Mammary epithelial cell (primary cell): ENCODE measurements at regions of chr2 and their contacts with region 1.

Region 1: DNA sequence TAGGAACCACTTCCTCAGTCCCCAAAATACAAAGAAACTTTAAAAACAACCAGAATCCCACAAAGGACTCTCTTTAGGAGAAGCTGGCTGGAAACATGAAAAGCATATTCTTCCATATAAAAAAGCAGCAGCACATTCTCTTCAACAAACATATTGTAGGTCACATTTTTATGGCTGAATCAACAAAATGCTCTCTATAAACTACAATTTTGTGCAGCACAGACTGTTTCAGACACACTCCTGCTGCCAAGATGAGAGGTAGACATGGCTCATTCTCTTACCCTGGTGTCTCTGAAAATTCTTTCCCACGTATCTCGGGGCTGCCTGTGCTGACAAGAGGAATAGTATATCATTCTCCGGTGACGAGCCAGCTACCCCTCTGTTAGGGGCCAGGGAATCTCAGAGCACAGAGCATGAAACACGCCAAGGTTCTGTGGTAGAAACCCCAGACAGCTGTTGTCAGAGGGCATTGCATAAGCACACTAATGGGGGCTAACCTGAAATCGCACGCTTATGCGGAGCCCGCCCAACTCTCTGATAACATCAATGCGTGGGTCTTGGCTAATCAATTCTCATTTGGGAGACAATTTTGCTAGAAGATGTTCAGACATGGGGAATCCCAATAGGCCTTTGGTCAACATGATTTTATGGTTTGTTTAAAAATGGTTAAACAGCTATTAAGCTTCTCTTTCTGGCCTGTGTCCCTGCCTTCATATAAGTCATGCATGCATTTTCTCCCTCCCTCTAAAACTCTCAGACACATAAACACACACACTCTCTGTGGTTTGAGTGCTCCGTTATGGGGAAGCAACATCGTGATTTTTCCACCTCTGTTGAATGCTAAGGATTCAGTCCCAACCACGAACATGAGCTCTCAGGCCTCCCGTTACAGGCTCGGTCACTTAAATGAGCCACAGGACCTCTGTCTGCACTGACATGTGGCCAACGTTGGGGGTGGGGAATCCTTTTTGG is 177.5 kb downstream of the INO80D start:
- DNase-seq: no peak
- H3K4me3 ChIP-seq: no peak overlapping the region
- H3K27ac ChIP-seq: no peak overlapping the region
- H3K4me1 ChIP-seq: no peaks in the 10 kb centered on the region
- H3K27me3 ChIP-seq: peaks cover 2% of the 10 kb centered on the region
- CTCF ChIP-seq: no peak

Region 2: DNA sequence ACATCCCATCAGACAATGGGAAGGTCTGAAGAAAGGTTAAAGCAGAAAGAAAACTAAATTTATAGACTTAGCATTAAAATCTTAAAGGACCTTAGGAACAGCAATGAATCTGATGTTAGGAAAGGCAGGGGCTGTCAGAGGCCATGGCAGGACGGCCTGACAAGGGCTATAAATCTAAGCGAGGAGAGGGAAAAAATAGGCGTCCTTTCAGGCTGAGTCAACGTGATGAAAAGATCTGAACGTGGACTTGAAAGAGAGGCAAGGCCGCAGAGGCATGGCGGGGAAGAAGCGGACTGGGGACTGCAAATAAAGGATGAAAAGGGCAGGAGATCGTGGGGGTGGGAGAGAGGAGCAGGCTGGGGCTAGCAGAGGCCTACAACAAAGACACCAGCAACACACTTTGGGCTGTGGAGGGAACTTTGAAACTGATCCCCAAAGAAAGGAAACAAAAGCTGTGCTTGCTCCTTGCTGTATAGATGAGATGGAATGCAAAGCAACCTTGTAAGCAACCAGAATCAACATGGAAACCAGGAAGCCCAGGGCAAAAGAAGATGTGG is 80.6 kb before region 1 on chr2:
- CTCF ChIA-PET with region 1: no interaction called
- dilution Hi-C with region 1: loop called (anchors 5 kb)
- in situ Hi-C with region 1: no loop called
- intact Hi-C with region 1: no loop called
- DNase-seq: no peak
- H3K4me3 ChIP-seq: no peak overlapping the region
- H3K27ac ChIP-seq: no peak overlapping the region
- H3K4me1 ChIP-seq: no peaks in the 10 kb centered on the region
- H3K27me3 ChIP-seq: no peaks in the 10 kb centered on the region
- CTCF ChIP-seq: no peak